ENCODE measurements at regions of chr15 and their contacts with region 1.

Region 1: DNA sequence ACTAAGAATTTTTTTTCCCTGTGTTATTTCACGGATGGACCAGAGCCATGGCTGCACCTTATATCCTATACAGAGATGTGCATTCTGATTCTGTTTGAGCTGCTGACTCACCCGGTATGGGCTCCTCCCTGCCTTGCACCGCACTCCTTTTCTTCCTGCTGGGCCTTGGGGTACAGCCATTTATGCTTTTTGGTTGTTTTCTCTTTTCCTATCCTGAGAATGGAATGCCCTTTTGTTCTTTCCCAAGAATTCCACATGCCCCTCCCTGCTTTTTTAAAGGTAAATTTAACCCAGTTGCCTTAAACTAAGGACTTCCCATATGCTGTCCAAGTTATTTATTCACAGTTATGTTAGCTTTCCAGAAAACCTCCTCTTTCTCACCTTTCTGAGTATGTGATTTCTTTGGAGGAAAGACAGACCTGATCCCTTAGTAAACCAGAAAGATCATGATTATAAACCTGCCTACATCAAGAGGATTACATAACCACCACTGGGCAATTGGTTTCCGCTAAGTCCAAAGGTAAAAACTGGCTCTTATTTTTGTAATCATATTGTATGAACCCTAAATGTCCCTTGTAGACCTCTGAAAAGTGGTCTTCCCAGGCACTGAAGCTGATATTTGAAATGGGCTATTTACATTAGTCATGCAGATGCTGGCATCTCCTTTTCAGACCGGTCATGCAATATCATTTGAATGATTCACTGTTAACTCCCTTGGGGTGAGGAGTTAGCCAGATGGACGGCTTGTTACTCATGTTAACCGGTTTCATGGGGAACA is 45.5 kb downstream of the TMOD3 start:
- DNase-seq: peak; percentile 89
- ATAC-seq: peak; percentile 88
- H3K4me3 ChIP-seq: peak overlapping the region; percentile 12 to 28; a peak in 3 of 4 replicates
- H3K27ac ChIP-seq: peak overlapping the region; percentile 84
- H3K4me1 ChIP-seq: peaks cover 69 to 72% of the 10 kb centered on the region in 2 experiments
- H3K27me3 ChIP-seq: no peaks in the 10 kb centered on the region
- CTCF ChIP-seq: no peak
- POLR2A ChIP-seq: no peak
- RAD21 ChIP-seq: peak; percentile 15; the same call in 1 of the 2 replicates

Region 2: DNA sequence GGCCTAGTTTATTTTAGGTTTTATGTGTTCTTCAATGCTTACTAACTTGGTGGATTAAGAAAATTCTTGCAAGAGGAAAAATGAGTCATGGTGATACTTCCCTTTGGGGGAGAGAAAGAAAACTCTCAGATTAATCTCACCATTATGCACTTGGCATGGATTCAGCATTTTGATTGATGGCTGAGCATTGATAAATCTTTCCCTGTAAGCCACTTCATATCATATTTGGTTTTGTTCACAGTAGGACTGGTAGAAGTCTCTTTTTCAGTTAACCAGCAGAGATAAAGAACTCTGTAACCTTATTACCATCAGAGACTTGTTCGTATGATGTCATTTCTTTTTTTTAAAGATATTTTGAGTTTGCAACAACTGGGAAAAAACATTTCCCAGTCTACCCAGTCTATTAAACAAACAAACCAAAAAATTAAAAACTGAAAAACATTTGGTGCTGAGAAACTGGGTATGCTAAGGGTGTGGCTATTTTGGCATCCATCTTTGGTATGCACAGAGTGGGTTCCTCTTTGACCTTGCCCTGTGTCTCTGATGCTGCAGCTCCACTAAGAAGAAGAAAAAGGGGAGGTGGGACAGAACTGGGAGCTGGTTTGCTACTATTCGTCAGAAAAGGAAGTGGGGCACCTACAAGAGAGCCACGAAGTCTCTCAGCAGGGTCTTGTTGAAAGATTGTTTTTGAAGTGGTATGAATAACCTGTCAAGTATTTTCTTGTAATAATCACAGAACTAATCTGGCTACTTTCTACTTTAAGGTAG is 28.3 kb before region 1 on chr15:
- CTCF ChIA-PET with region 1: no interaction called
- POLR2A ChIA-PET with region 1: interaction called, 3 read pairs
- RAD21 ChIA-PET with region 1: no interaction called
- intact Hi-C with region 1: loop called (anchors 2 kb)
- DNase-seq: peak; percentile 87
- ATAC-seq: peak; percentile 69
- H3K4me3 ChIP-seq: peak overlapping the region in 1 of 2 experiments; percentile 35; a peak in 3 of 4 replicates
- H3K27ac ChIP-seq: peak overlapping the region; percentile 98
- H3K4me1 ChIP-seq: peaks cover 81 to 92% of the 10 kb centered on the region in 2 experiments
- H3K27me3 ChIP-seq: no peaks in the 10 kb centered on the region
- CTCF ChIP-seq: no peak
- POLR2A ChIP-seq: no peak
- RAD21 ChIP-seq: peak; percentile 23; the same call in 1 of the 2 replicates

Region 3: DNA sequence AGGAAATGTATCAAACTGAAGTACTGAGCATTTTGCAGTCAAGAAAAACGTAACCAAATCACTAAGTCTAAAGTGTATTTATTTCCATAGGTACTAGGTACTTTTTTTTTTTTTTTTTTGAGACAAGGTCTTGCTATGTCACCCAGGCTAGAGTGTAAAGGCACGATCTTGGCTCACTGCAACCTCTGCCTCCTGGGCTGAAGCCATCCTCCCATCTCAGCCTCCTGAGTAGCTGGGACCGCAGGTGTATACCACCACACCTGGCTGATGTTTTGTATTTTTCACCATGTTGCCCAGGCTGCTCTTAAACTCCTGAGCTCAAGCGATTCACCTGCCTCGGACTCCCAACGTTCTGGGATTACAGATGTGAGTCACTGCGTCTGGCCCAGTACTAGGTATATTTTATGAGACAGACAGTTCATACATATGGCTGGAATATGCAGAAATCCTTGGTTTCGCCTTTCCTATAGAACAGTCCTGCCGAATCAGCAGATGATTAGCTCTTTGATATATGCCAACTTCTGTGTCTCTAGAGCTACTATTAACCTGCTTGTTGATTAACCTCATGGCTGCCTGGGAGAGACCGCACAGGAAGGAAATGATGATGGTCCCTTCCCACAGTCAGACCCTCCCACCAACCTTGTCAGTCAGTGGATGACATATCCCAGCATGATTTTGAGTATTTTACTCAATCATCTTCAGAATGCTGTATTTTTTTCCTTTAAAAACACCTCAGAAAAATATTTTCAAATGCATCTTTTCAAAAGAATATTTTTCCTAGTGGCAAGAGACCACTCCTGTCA is 13.2 kb before region 1 on chr15:
- CTCF ChIA-PET with region 1: no interaction called
- POLR2A ChIA-PET with region 1: no interaction called
- RAD21 ChIA-PET with region 1: no interaction called
- intact Hi-C with region 1: no loop called
- DNase-seq: no peak
- ATAC-seq: no peak
- H3K4me3 ChIP-seq: no peak overlapping the region
- H3K27ac ChIP-seq: peak overlapping the region; percentile 26; the same call in 1 of the 2 replicates
- H3K4me1 ChIP-seq: peaks cover 58 to 67% of the 10 kb centered on the region in 2 experiments
- H3K27me3 ChIP-seq: no peaks in the 10 kb centered on the region
- CTCF ChIP-seq: no peak
- POLR2A ChIP-seq: no peak
- RAD21 ChIP-seq: no peak

Region 4: DNA sequence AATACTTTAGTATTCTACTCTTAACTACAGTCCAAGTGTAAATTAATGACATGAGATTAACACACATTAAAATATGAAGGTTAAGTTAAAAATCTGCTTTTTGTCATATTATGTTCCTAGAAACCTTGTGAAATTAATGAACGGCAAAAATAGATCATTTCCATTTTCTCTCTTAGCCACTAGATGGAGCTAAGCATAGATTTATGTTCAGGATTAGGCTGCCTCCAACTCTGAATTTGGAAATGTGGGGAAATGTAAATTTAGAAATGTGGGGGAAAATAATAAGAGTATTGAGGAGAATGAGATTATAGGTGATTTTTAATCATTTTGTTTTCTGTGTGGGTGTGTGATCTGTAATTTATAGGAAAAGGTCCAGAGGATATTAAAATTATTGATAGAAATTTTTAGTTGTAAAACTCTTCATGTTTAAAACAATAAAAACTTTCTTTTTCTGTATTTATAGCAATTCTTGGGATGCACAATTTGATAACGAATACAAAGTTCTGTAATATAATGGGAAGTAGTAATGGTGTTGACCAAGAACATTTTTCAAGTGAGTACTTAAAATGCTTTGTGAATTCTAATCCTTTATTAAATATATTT is 13.8 kb after region 1 on chr15:
- CTCF ChIA-PET with region 1: interaction called, 18 read pairs
- POLR2A ChIA-PET with region 1: no interaction called
- RAD21 ChIA-PET with region 1: no interaction called
- intact Hi-C with region 1: no loop called
- DNase-seq: no peak
- ATAC-seq: peak; percentile 47; the same call in 1 of the 2 replicates
- H3K4me3 ChIP-seq: no peak overlapping the region
- H3K27ac ChIP-seq: no peak overlapping the region
- H3K4me1 ChIP-seq: peaks cover 9 to 23% of the 10 kb centered on the region in 2 experiments; a peak in 3 of 4 replicates
- H3K27me3 ChIP-seq: no peaks in the 10 kb centered on the region
- CTCF ChIP-seq: peak; percentile 55 to 83 (median 69); a peak in 5 of 6 replicates
- POLR2A ChIP-seq: no peak
- RAD21 ChIP-seq: peak; percentile 59

Region 5: DNA sequence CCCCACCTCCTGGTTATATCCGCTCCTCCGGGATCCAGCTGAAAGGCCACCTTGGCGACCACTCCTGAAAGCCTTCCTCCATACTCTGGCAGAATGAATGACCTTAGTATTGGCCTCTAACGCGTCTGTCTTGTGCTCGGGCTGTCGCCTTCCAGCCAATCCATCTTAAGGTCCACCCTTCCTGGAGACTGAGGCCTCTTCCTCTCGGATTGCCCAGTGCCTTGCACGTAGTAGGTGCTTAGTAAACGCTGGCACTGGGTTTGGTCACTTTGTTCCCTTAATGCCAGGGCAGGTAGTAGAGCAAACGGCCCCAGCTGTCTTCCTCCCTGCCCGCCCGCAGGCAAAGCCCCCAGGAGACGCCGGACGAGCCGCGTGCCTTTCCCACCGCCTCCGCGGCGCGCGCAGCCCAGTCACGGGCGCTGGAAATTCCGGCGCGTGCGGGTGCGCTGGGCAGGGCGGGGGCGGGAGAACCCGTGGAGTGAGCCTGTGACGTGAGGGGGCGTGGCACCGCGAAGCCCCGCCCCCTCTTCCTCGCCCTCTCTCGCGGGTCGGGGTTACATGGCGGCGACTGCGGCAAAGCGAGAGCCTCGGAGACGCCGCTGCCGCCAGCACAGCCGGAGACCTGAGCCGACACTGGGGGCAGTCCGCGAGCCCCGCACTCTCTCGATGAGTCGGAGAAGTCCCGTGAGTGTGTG is 143.9 kb after region 1 on chr15 and contains the start of gene MAPK6:
- CTCF ChIA-PET with region 1: no interaction called
- POLR2A ChIA-PET with region 1: no interaction called
- RAD21 ChIA-PET with region 1: no interaction called
- intact Hi-C with region 1: no loop called
- DNase-seq: peak; percentile 81
- ATAC-seq: peak; percentile 82
- H3K4me3 ChIP-seq: peak within 1 kb of the TSS; percentile 76 to 78
- H3K27ac ChIP-seq: peak within 1 kb of the TSS; percentile 90
- H3K4me1 ChIP-seq: peaks cover 34 to 43% of the 10 kb centered on the region in 2 experiments
- H3K27me3 ChIP-seq: no peaks in the 10 kb centered on the region
- CTCF ChIP-seq: no peak
- POLR2A ChIP-seq: peak; percentile 44
- RAD21 ChIP-seq: no peak
- total RNA-seq, gene MAPK6: 57.4 TPM

Region 6: DNA sequence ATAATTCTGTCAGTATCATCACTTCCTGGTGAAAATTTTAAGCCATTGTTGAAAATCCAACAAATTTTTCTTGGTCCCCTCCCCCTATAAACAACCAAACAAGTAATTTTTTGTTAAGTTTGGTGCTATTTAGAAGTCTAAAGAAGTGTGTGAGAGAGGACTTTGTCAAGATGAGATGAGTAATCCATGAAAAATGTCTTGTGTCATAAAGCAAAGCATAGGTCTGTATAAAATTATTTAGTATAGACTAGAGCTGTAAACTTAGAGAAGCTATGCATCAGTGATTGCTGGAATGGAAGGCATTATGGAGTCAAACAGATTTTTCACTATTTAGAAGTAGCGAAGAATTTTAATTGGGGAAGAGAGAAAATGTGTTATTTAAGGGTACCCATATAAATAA is 175.5 kb after region 1 on chr15:
- CTCF ChIA-PET with region 1: no interaction called
- POLR2A ChIA-PET with region 1: no interaction called
- RAD21 ChIA-PET with region 1: no interaction called
- intact Hi-C with region 1: no loop called
- DNase-seq: no peak
- ATAC-seq: peak; percentile 57
- H3K4me3 ChIP-seq: no peak overlapping the region
- H3K27ac ChIP-seq: no peak overlapping the region
- H3K4me1 ChIP-seq: peaks cover 14 to 44% of the 10 kb centered on the region in 2 experiments
- H3K27me3 ChIP-seq: no peaks in the 10 kb centered on the region
- CTCF ChIP-seq: no peak
- POLR2A ChIP-seq: no peak
- RAD21 ChIP-seq: no peak

Region 7: DNA sequence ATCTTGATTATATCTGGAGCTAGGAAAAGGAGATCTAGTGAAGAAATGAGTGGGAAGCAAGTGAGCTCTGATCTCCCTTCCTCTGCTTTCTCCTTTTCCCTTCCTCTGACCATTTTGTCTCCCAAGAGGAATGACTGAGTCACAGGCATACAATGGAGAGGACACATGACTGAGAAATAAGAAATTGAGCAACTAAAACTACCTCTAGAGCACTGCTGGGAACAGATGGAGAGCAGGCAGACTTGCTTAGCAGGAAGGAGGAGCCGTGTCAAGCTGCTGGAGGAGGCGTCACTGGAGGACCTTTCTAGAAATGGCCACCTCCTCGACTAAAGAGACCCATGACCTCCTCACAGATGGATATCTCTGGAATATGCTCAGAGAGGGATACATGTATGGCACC is 487.6 kb after region 1 on chr15:
- CTCF ChIA-PET with region 1: no interaction called
- POLR2A ChIA-PET with region 1: no interaction called
- RAD21 ChIA-PET with region 1: no interaction called
- intact Hi-C with region 1: no loop called
- DNase-seq: no peak
- ATAC-seq: no peak
- H3K4me3 ChIP-seq: no peak overlapping the region
- H3K27ac ChIP-seq: no peak overlapping the region
- H3K4me1 ChIP-seq: no peaks in the 10 kb centered on the region; a peak in 1 of 4 replicates
- H3K27me3 ChIP-seq: no peaks in the 10 kb centered on the region
- CTCF ChIP-seq: no peak
- POLR2A ChIP-seq: no peak
- RAD21 ChIP-seq: no peak